Mammary epithelial cell (primary cell): ENCODE measurements at regions of chr13 and their contacts with region 1.

Region 1: DNA sequence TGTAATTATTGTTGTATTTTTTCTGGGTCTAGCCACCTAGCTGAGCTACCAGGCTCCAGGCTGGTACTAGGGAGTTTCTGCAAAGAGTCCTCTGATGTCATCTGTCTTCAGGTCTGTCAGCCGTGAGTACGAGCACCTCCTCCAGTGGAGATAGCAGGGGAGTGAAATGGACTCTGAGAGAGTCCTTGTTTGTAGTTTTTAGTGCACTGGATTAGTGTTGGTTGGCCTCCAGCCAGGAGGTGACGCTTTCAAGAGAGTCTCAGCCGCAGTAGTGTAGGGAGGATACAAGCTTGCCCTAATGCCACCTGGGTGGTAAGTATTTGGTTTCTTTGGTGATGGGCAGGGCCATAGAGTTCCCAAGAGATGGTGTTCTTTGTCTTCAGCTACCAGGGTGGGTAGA is 384.8 kb downstream of the SLC7A1 start:
- DNase-seq: no peak
- H3K4me3 ChIP-seq: no peak overlapping the region
- H3K27ac ChIP-seq: no peak overlapping the region
- H3K4me1 ChIP-seq: no peaks in the 10 kb centered on the region
- H3K27me3 ChIP-seq: no peaks in the 10 kb centered on the region
- CTCF ChIP-seq: no peak

Region 2: GRCh38 chr13:28885181-28885580 is 325.5 kb before region 1 on chr13:
- CTCF ChIA-PET with region 1: no interaction called
- dilution Hi-C with region 1: no loop called
- in situ Hi-C with region 1: no loop called
- intact Hi-C with region 1: no loop called
- DNase-seq: no peak
- H3K4me3 ChIP-seq: no peak overlapping the region
- H3K27ac ChIP-seq: no peak overlapping the region
- H3K4me1 ChIP-seq: no peaks in the 10 kb centered on the region
- H3K27me3 ChIP-seq: no peaks in the 10 kb centered on the region
- CTCF ChIP-seq: no peak

Region 3: GRCh38 chr13:28983641-28984040 is 227.0 kb before region 1 on chr13:
- CTCF ChIA-PET with region 1: no interaction called
- dilution Hi-C with region 1: no loop called
- in situ Hi-C with region 1: no loop called
- intact Hi-C with region 1: no loop called
- DNase-seq: no peak
- H3K4me3 ChIP-seq: no peak overlapping the region
- H3K27ac ChIP-seq: no peak overlapping the region
- H3K4me1 ChIP-seq: no peaks in the 10 kb centered on the region
- H3K27me3 ChIP-seq: no peaks in the 10 kb centered on the region
- CTCF ChIP-seq: no peak

Region 4: DNA sequence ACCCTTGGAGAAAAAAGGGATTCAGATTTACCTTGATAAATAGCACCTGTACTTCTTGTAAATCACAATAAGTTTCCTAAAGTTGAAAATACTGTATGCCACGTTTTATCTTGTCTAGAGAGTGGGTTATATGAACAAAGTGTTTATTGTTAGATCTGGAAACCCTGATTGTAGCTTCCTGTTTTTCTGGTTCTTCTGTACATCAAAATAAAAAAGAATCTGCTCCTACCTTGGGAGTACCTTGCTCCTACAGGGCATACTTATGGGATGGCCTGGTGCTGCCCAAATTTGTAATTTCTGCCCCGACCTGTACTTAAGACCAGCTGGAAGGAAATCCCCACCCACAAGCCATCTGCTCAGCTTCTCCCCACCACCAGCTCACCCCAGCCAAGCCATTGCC is 143.7 kb after region 1 on chr13:
- CTCF ChIA-PET with region 1: no interaction called
- dilution Hi-C with region 1: loop called (anchors 5 kb)
- in situ Hi-C with region 1: loop called in 1 of 2 experiments (anchors 5 kb)
- intact Hi-C with region 1: no loop called
- DNase-seq: no peak
- H3K4me3 ChIP-seq: no peak overlapping the region
- H3K27ac ChIP-seq: no peak overlapping the region
- H3K4me1 ChIP-seq: no peaks in the 10 kb centered on the region
- H3K27me3 ChIP-seq: no peaks in the 10 kb centered on the region
- CTCF ChIP-seq: no peak